ENCODE measurements at regions of chr17 and their contacts with region 1.

Region 1: DNA sequence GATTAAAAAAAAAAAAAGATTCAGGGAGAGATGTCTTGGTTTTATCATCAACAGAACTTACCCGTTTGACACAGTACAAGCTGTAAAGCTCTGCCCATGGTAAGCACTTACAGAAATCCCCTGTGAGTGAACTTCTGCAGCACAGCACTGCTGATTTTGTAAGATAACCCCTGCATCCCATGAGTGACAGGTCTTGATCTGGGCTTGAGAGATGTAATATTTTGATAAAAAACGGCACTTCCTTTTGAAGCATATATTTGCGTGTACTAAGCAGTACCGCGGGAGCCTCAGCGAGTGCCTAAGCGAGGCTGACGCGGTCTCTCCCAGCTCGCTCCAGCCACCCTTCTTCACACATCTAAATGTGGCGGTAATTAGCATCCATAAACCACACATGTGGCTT is 50.5 kb downstream of the IKZF3 start:
- DNase-seq: peak; percentile 27 to 96 (median 69)
- ATAC-seq: peak; percentile 94
- H3K4me3 ChIP-seq: peak overlapping the region; percentile 18 to 41
- H3K4me3 Mint-ChIP-seq: peak overlapping the region; percentile 75
- H3K27ac ChIP-seq: peak overlapping the region; percentile 62 to 75
- H3K27ac Mint-ChIP-seq: peak overlapping the region; percentile 94
- H3K4me1 ChIP-seq: peaks cover 62% of the 10 kb centered on the region
- H3K4me1 Mint-ChIP-seq: peaks cover 74% of the 10 kb centered on the region
- H3K27me3 ChIP-seq: no peaks in the 10 kb centered on the region
- H3K27me3 Mint-ChIP-seq: no peaks in the 10 kb centered on the region
- CTCF ChIP-seq: no peak

Region 2: DNA sequence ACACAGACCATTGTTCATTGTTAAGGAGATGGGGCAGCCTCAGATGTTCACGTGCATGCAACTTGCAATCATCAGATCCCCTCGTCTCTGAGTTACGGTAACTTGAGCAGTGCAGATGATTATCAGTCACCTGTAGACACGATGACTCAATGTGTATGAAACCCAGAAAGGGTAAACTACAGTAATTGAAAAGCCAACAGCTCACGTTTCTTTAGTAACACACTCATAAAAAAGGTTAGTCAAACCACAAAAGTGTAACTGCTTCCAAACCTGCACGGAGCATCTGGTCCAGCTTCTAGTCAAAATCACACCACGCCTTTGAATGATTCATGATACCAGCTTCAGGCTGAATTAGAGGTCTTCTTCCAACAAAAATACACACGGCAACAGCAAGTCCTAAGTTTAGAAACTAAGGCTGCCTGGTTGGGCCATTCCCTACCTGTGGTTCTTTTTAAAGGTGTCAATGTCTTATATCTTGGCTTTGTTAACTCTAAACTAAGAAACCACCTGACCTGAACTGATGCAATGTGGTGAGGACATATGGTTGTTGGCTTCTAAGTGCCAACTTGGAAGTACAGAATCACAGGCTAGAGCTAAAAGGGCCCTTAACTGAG is 43.5 kb before region 1 on chr17:
- CTCF ChIA-PET with region 1: no interaction called
- POLR2A ChIA-PET with region 1: interaction called, 18 read pairs
- intact Hi-C with region 1: loop called (anchors 1 to 5 kb)
- DNase-seq: peak in 8 of 9 experiments; percentile 38 to 90 (median 66)
- ATAC-seq: peak; percentile 78
- H3K4me3 ChIP-seq: peak overlapping the region in 1 of 2 experiments; percentile 1
- H3K4me3 Mint-ChIP-seq: peak overlapping the region; percentile 66
- H3K27ac ChIP-seq: peak overlapping the region; percentile 46 to 82
- H3K27ac Mint-ChIP-seq: peak overlapping the region; percentile 97
- H3K4me1 ChIP-seq: peaks cover 99% of the 10 kb centered on the region
- H3K4me1 Mint-ChIP-seq: peaks cover 96% of the 10 kb centered on the region
- H3K27me3 ChIP-seq: no peaks in the 10 kb centered on the region
- H3K27me3 Mint-ChIP-seq: no peaks in the 10 kb centered on the region
- CTCF ChIP-seq: no peak

Region 3: GRCh38 chr17:39794249-39794970 is 19.2 kb before region 1 on chr17:
- CTCF ChIA-PET with region 1: interaction called, 4 read pairs
- POLR2A ChIA-PET with region 1: interaction called, 3 read pairs
- intact Hi-C with region 1: loop called (anchors 2 kb)
- DNase-seq: peak in 4 of 9 experiments; percentile 28 to 73 (median 45)
- ATAC-seq: peak; percentile 67
- H3K4me3 ChIP-seq: peak overlapping the region in 1 of 2 experiments; percentile 1
- H3K4me3 Mint-ChIP-seq: peak overlapping the region; percentile 65
- H3K27ac ChIP-seq: peak overlapping the region; percentile 3 to 78
- H3K27ac Mint-ChIP-seq: peak overlapping the region; percentile 89
- H3K4me1 ChIP-seq: peaks cover 72% of the 10 kb centered on the region
- H3K4me1 Mint-ChIP-seq: peaks cover 75% of the 10 kb centered on the region
- H3K27me3 ChIP-seq: no peaks in the 10 kb centered on the region
- H3K27me3 Mint-ChIP-seq: no peaks in the 10 kb centered on the region
- CTCF ChIP-seq: no peak

Region 4: GRCh38 chr17:39800540-39800939 is 13.1 kb before region 1 on chr17:
- CTCF ChIA-PET with region 1: no interaction called
- POLR2A ChIA-PET with region 1: interaction called, 24 read pairs
- intact Hi-C with region 1: loop called (anchors 1 to 2 kb)
- DNase-seq: peak; percentile 16 to 87 (median 61)
- ATAC-seq: peak; percentile 95
- H3K4me3 ChIP-seq: no peak overlapping the region
- H3K4me3 Mint-ChIP-seq: peak overlapping the region; percentile 26
- H3K27ac ChIP-seq: peak overlapping the region; percentile 19 to 49
- H3K27ac Mint-ChIP-seq: peak overlapping the region; percentile 94
- H3K4me1 ChIP-seq: peaks cover 59% of the 10 kb centered on the region
- H3K4me1 Mint-ChIP-seq: peaks cover 64% of the 10 kb centered on the region
- H3K27me3 ChIP-seq: no peaks in the 10 kb centered on the region
- H3K27me3 Mint-ChIP-seq: no peaks in the 10 kb centered on the region
- CTCF ChIP-seq: no peak

Region 5: DNA sequence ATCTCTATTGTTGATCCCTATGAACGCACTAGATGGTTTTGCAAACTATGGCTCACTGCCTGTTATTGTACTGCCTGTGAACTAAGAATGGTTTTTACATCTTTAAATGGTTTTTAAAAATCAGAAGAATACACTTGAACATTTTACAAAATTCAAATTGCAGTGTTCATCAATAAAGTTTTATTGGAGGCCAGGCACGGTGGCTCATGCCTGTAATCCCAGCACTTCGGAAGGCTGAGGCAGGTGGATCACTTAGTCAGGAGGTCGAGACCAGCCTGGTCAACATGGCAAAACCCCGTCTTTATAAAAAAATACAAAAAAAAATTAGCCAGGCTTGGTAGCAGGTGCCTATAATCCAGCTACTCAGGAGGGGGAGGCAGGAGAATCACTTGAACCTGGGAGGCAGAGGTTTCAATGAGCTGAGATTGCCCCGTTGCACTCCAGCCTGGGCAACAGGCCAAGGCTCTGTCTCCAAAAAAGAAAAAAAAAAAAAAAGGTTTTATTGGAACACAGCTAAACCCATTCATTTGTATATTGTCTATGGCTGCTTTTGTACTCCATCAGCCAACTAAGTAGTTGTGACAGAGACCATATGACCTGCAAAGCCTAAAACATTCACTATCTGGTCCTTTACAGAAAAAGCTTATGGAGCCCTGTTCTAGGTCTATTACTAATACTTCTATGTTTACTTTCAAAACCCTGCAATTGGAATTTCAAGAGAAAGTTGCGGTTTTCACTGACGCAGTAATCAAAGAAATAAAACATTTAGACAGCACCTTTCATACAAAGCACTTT is 31.6 kb after region 1 on chr17:
- CTCF ChIA-PET with region 1: interaction called, 4 read pairs
- POLR2A ChIA-PET with region 1: interaction called, 5 read pairs
- intact Hi-C with region 1: loop called (anchors 5 kb)
- DNase-seq: peak in 1 of 9 experiments; percentile 30
- ATAC-seq: no peak
- H3K4me3 ChIP-seq: no peak overlapping the region
- H3K4me3 Mint-ChIP-seq: no peak overlapping the region
- H3K27ac ChIP-seq: no peak overlapping the region
- H3K27ac Mint-ChIP-seq: peak overlapping the region; percentile 89
- H3K4me1 ChIP-seq: peaks cover 81% of the 10 kb centered on the region
- H3K4me1 Mint-ChIP-seq: peaks cover 76% of the 10 kb centered on the region
- H3K27me3 ChIP-seq: no peaks in the 10 kb centered on the region
- H3K27me3 Mint-ChIP-seq: no peaks in the 10 kb centered on the region
- CTCF ChIP-seq: no peak

Region 6: DNA sequence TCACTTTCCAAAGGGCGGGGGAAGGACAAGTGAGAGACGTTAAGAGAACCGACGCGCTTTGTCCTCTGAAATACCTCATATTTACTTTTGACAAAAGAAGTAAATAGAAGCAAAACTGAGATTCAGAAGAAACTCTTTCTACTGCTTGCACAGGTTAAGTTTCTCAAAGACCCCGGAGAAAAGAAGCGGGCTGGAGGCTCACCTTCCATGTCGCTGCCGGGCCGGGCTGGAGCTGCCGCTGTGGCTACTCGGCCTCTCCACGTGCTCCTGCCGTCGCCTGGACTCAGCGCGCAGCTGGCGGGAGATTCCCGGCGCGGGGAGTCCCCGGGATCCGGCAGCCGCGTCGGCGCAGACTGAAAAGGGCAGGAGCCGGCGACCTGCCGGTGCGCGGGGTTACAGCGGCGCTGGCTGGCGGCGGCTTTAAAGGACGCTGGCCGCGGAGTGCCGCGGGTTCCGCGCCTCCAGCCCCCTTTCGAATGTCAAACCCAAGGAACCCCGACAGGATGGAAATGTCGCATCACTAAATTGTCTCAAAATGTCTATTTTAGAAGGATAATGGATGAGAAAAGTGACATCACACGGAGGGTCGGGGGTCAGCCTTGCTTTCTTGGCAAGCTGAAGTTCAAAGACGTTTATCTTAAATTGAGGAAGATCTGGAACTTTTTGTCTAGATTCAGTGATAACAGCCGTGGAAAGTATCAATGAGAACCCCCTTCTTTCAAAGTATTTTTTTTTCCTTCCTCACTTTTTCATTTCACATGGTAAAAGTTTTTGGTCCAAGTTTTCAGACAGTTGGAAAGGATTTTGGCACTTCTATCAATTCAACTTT is 50.5 kb after region 1 on chr17 and contains the start of gene IKZF3:
- CTCF ChIA-PET with region 1: interaction called, 7 read pairs
- POLR2A ChIA-PET with region 1: interaction called, 6 read pairs
- intact Hi-C with region 1: loop called in 1 of 2 experiments (anchors 2 kb)
- DNase-seq: peak; percentile 59 to 96 (median 78)
- ATAC-seq: peak; percentile 67
- H3K4me3 ChIP-seq: peak within 1 kb of the TSS; percentile 65 to 74
- H3K4me3 Mint-ChIP-seq: peak within 1 kb of the TSS; percentile 89
- H3K27ac ChIP-seq: peak within 1 kb of the TSS; percentile 92 to 94
- H3K27ac Mint-ChIP-seq: peak within 1 kb of the TSS; percentile 98
- H3K4me1 ChIP-seq: peaks cover 56% of the 10 kb centered on the region
- H3K4me1 Mint-ChIP-seq: peaks cover 61% of the 10 kb centered on the region
- H3K27me3 ChIP-seq: no peaks in the 10 kb centered on the region
- H3K27me3 Mint-ChIP-seq: no peaks in the 10 kb centered on the region
- CTCF ChIP-seq: peak; percentile 49
- total RNA-seq, gene IKZF3: 57.3 to 59.8 TPM

Measured in CD8-positive, alpha-beta T cell (primary cell).